Sigmoid colon (tissue), 7 donors: ENCODE measurements at regions of chr1 and their contacts with region 1.

Region 1: GRCh38 chr1:197614916-197615692 is 160.2 kb downstream of the DENND1B start:
- DNase-seq: no peak
- H3K4me3 ChIP-seq: no peak overlapping the region
- H3K27ac ChIP-seq: no peak overlapping the region
- H3K4me1 ChIP-seq: no peaks in the 10 kb centered on the region
- H3K27me3 ChIP-seq: no peaks in the 10 kb centered on the region
- CTCF ChIP-seq: peak in 3 of 4 experiments; percentile 27 to 42 (median 27)
- EP300 ChIP-seq: no peak
- POLR2A ChIP-seq: no peak

Region 2: GRCh38 chr1:197595304-197595904 is 19.7 kb before region 1 on chr1:
- intact Hi-C with region 1: no loop called
- DNase-seq: no peak
- H3K4me3 ChIP-seq: no peak overlapping the region
- H3K27ac ChIP-seq: no peak overlapping the region
- H3K4me1 ChIP-seq: no peaks in the 10 kb centered on the region
- H3K27me3 ChIP-seq: no peaks in the 10 kb centered on the region
- CTCF ChIP-seq: no peak
- EP300 ChIP-seq: no peak
- POLR2A ChIP-seq: no peak

Region 3: GRCh38 chr1:197868751-197869489 is 253.8 kb after region 1 on chr1:
- intact Hi-C with region 1: loop called (anchors 5 kb)
- DNase-seq: no peak
- H3K4me3 ChIP-seq: no peak overlapping the region
- H3K27ac ChIP-seq: no peak overlapping the region
- H3K4me1 ChIP-seq: no peaks in the 10 kb centered on the region
- H3K27me3 ChIP-seq: no peaks in the 10 kb centered on the region
- CTCF ChIP-seq: peak in 3 of 4 experiments; percentile 32 to 46 (median 39)
- EP300 ChIP-seq: no peak
- POLR2A ChIP-seq: no peak

Region 4: GRCh38 chr1:197924516-197925123 is 309.5 kb after region 1 on chr1:
- intact Hi-C with region 1: loop called (anchors 10 kb)
- DNase-seq: no peak
- H3K4me3 ChIP-seq: no peak overlapping the region
- H3K27ac ChIP-seq: no peak overlapping the region
- H3K4me1 ChIP-seq: peaks cover 0 to 11% (median 3%) of the 10 kb centered on the region in 4 donors
- H3K27me3 ChIP-seq: peaks cover 20 to 83% (median 41%) of the 10 kb centered on the region in 3 donors
- CTCF ChIP-seq: peak in 3 of 4 experiments; percentile 39 to 57 (median 51)
- EP300 ChIP-seq: no peak
- POLR2A ChIP-seq: no peak